ENCODE measurements at regions of chr1 and their contacts with region 1.

Region 1: GRCh38 chr1:8026153-8026975 is at the start of gene ERRFI1:
- DNase-seq: peak; percentile 93
- H3K4me3 Mint-ChIP-seq: peak within 1 kb of the TSS; percentile 88
- H3K27ac Mint-ChIP-seq: peak within 1 kb of the TSS; percentile 93
- H3K4me1 Mint-ChIP-seq: peaks cover 39% of the 10 kb centered on the region
- H3K27me3 Mint-ChIP-seq: no peaks in the 10 kb centered on the region
- CTCF ChIP-seq: no peak
- total RNA-seq, gene ERRFI1: 86.4 and 111 TPM in 2 replicates

Region 2: GRCh38 chr1:7334475-7335035 is 691.8 kb before region 1 on chr1:
- CTCF ChIA-PET with region 1: no interaction called
- POLR2A ChIA-PET with region 1: no interaction called
- intact Hi-C with region 1: no loop called
- DNase-seq: peak; percentile 68
- H3K4me3 Mint-ChIP-seq: no peak overlapping the region
- H3K27ac Mint-ChIP-seq: peak overlapping the region; percentile 78
- H3K4me1 Mint-ChIP-seq: peaks cover 16% of the 10 kb centered on the region
- H3K27me3 Mint-ChIP-seq: no peaks in the 10 kb centered on the region
- CTCF ChIP-seq: no peak

Region 3: GRCh38 chr1:7983086-7983778 is 43.1 kb before region 1 on chr1:
- CTCF ChIA-PET with region 1: interaction called, 11 read pairs
- POLR2A ChIA-PET with region 1: interaction called, 12 read pairs
- intact Hi-C with region 1: loop called (anchors 1 kb)
- DNase-seq: no peak
- H3K4me3 Mint-ChIP-seq: no peak overlapping the region
- H3K27ac Mint-ChIP-seq: peak overlapping the region; percentile 54
- H3K4me1 Mint-ChIP-seq: peaks cover 6% of the 10 kb centered on the region
- H3K27me3 Mint-ChIP-seq: no peaks in the 10 kb centered on the region
- CTCF ChIP-seq: no peak

Region 4: DNA sequence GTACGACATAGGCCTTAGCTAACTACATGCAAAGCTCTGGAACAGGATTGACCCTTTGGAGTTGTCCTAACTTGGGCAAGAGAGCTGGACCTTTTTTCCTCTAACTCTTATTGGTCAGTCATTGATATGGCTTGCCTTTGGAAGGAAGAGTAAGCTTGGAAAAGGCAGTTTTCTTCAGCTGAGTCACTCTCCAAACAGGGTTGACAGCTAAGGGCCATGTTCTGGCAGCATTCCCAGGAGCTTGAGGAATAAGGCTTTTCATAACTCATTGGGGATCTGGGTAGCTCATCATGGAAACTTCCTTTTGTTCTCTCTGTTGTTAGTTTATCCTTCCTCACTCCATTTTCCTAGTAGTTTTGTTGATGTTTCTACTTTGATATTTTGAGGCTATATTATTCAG is 14.2 kb after region 1 on chr1:
- CTCF ChIA-PET with region 1: interaction called, 5 read pairs
- POLR2A ChIA-PET with region 1: interaction called, 11 read pairs
- intact Hi-C with region 1: no loop called
- DNase-seq: peak; percentile 99
- H3K4me3 Mint-ChIP-seq: no peak overlapping the region
- H3K27ac Mint-ChIP-seq: peak overlapping the region; percentile 66
- H3K4me1 Mint-ChIP-seq: peaks cover 30% of the 10 kb centered on the region
- H3K27me3 Mint-ChIP-seq: no peaks in the 10 kb centered on the region
- CTCF ChIP-seq: no peak

Region 5: DNA sequence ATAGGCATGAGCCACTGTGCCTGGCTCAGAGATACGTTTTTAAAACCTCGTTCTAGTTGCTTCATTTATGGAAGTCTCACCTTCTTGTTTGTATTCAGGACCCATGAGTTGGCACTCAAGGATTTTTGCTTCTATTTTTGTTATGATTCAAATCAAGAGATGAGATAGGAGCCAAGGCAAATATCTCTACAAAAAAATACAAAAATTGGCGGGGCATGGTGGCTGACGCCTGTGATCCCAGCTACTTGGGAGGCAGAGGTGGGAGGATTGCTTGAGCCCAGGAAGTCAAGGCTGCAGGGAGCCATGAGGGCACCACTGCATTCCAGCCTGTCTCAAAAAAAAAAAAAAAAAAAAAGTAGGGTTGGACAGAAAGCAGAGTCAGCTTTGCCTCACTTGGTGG is 36.5 kb after region 1 on chr1:
- CTCF ChIA-PET with region 1: no interaction called
- POLR2A ChIA-PET with region 1: no interaction called
- intact Hi-C with region 1: no loop called
- DNase-seq: no peak
- H3K4me3 Mint-ChIP-seq: no peak overlapping the region
- H3K27ac Mint-ChIP-seq: no peak overlapping the region
- H3K4me1 Mint-ChIP-seq: peaks cover 16% of the 10 kb centered on the region
- H3K27me3 Mint-ChIP-seq: no peaks in the 10 kb centered on the region
- CTCF ChIP-seq: no peak

Region 6: DNA sequence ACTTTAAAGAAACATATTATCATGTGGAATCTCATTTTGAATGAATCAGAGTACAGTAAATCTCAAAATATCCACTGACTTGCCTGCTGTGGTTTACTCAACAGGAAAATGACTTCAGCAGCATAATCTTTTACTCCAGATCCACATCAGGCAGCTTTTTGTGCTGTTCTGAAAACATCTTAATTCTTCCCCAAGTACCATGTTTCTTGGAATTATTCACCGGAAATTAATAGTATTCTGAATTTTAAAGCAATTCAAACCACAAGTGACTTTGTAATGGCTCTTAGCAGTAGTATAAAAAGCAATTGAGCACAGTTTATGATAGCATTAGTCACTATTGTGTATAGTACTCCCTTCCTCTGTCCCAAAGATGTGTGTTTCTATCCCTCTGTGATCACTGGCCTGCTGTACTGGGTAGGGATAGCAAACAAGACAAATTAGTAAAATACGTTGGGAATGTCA is 63.9 kb after region 1 on chr1:
- CTCF ChIA-PET with region 1: no interaction called
- POLR2A ChIA-PET with region 1: interaction called, 16 read pairs
- intact Hi-C with region 1: loop called (anchors 5 kb)
- DNase-seq: peak; percentile 49
- H3K4me3 Mint-ChIP-seq: no peak overlapping the region
- H3K27ac Mint-ChIP-seq: peak overlapping the region; percentile 91
- H3K4me1 Mint-ChIP-seq: peaks cover 55% of the 10 kb centered on the region
- H3K27me3 Mint-ChIP-seq: no peaks in the 10 kb centered on the region
- CTCF ChIP-seq: no peak

Region 7: DNA sequence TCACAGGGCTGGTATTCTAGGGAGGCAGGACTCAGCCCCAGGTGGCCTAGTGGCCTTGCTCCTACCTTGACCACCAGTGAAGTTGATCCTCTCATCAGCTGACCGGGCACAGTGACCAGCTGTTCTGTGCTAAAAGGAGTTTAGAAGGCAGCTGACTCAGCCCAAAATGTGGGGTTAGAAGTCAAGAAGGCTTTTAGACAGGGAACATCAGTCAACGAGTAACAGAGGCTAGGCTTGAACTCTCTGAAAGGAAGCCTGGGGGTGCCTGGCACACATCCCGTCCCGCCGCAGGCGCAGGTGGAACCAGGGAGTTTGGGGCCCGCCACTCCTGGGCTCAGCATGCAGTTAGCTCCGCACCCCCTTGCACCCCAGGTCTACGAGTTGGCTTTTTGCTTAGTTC is 176.7 kb after region 1 on chr1:
- CTCF ChIA-PET with region 1: interaction called, 7 read pairs
- POLR2A ChIA-PET with region 1: interaction called, 15 read pairs
- intact Hi-C with region 1: no loop called
- DNase-seq: no peak
- H3K4me3 Mint-ChIP-seq: no peak overlapping the region
- H3K27ac Mint-ChIP-seq: peak overlapping the region; percentile 91
- H3K4me1 Mint-ChIP-seq: peaks cover 47% of the 10 kb centered on the region
- H3K27me3 Mint-ChIP-seq: no peaks in the 10 kb centered on the region
- CTCF ChIP-seq: no peak

Region 8: DNA sequence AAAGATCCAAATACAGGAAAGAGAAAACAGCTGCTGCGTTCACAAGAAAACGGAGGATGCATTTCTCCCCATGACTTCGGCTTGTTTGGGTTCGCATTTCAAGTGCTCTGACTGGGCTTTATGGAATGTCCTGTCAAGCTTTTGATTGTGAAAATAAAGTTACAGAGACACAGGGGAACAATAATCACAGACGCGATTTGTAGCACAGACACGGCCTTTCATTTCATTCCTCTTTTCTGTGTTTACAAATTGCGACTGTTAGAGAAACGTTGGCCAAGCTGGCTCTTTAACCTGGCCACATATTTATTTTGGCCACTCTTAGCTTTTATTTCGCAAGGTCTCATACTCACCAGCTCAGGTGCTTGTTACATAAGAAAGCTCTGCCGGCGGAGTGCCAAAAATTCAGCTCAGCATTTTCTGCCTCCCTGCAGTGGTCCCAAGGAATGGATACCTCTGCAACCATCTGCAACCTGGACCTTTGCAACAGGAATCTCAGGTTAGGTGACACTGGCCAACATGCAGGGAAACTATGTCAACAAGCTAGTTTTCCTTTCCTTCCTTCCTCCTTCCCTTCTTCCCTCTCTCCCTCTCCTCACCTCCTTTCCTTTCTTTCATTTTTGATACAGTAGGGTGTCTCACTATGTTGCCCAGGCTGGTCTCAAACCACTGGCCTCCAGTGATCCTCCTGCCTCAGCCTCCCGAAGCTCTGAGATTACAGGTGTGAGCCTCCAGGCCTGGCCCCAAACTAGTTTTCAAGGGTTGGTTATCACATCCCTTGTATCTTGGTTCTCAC is 233.3 kb after region 1 on chr1:
- CTCF ChIA-PET with region 1: interaction called, 4 read pairs
- POLR2A ChIA-PET with region 1: interaction called, 55 read pairs
- intact Hi-C with region 1: no loop called
- DNase-seq: peak; percentile 93
- H3K4me3 Mint-ChIP-seq: peak overlapping the region; percentile 59
- H3K27ac Mint-ChIP-seq: peak overlapping the region; percentile 98
- H3K4me1 Mint-ChIP-seq: peaks cover 38% of the 10 kb centered on the region
- H3K27me3 Mint-ChIP-seq: no peaks in the 10 kb centered on the region
- CTCF ChIP-seq: no peak